Activated CD4-positive, alpha-beta memory T cell treated with anti-CD3 and anti-CD28 coated beads for 36 hours (primary cell): ENCODE measurements at regions of chr12 and their contacts with region 1.

Region 1: GRCh38 chr12:133080368-133081158 is at the start of gene ZNF140:
- DNase-seq: peak; percentile 97
- H3K4me3 Mint-ChIP-seq: no peak within 1 kb of the TSS
- H3K27ac Mint-ChIP-seq: no peak within 1 kb of the TSS
- H3K4me1 Mint-ChIP-seq: peaks cover 7% of the 10 kb centered on the region
- H3K27me3 Mint-ChIP-seq: no peaks in the 10 kb centered on the region
- total RNA-seq, gene ZNF140: 11.8 to 14.1 TPM

Region 2: DNA sequence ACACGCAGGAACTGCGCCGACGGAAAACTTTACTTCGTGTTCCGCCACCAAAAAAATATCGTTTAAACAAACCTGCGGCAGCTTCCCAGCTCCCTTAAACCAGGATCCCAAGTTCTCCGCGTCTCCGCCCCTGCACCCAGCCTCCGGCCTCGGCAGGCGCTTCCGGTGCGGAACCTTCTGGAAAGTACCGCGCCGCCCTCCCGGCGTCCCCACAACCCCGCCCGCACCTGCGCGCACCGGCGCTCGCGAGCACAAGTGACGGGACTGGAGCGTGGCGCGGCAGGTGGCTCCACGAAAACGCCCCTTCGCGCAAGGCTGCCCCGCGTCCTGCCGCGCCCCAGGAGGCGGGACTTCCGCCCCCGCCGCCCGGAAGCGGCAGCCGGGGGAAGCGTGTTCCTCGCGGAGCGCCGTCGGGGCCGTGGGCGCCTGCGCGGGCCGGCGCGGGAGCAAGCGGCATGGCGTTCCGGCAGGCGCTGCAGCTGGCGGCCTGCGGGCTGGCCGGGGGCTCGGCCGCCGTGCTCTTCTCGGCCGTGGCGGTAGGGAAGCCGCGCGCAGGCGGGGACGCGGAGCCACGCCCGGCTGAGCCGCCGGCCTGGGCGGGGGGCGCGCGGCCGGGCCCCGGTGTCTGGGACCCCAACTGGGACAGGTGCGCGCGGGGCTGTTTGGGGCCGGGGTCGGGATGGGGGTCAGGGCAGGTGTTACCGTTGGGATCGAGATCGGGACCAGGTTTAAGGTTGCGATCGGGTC is 370.0 kb before region 1 on chr12 and contains the start of gene PGAM5:
- CTCF ChIA-PET with region 1: no interaction called
- POLR2A ChIA-PET with region 1: no interaction called
- intact Hi-C with region 1: loop called (anchors 1 kb)
- DNase-seq: peak; percentile 93
- H3K4me3 Mint-ChIP-seq: peak within 1 kb of the TSS; percentile 83
- H3K27ac Mint-ChIP-seq: peak within 1 kb of the TSS; percentile 86
- H3K4me1 Mint-ChIP-seq: peaks cover 23% of the 10 kb centered on the region
- H3K27me3 Mint-ChIP-seq: no peaks in the 10 kb centered on the region
- total RNA-seq, gene PGAM5: 54.3 to 56.4 TPM

Region 3: GRCh38 chr12:132828706-132829534 is 251.6 kb before region 1 on chr12 and contains the start of gene GOLGA3:
- CTCF ChIA-PET with region 1: no interaction called
- POLR2A ChIA-PET with region 1: no interaction called
- intact Hi-C with region 1: loop called (anchors 1 kb)
- DNase-seq: peak; percentile 96
- H3K4me3 Mint-ChIP-seq: peak within 1 kb of the TSS; percentile 96
- H3K27ac Mint-ChIP-seq: peak within 1 kb of the TSS; percentile 100
- H3K4me1 Mint-ChIP-seq: peaks cover 50% of the 10 kb centered on the region
- H3K27me3 Mint-ChIP-seq: no peaks in the 10 kb centered on the region
- total RNA-seq, gene GOLGA3: 41.7 to 44.2 TPM

Region 4: GRCh38 chr12:132908145-132909044 is 172.2 kb before region 1 on chr12:
- CTCF ChIA-PET with region 1: no interaction called
- POLR2A ChIA-PET with region 1: no interaction called
- intact Hi-C with region 1: loop called (anchors 1 kb)
- DNase-seq: peak; percentile 99
- H3K4me3 Mint-ChIP-seq: peak overlapping the region; percentile 86
- H3K27ac Mint-ChIP-seq: peak overlapping the region; percentile 92
- H3K4me1 Mint-ChIP-seq: peaks cover 17% of the 10 kb centered on the region
- H3K27me3 Mint-ChIP-seq: peaks cover 4% of the 10 kb centered on the region

Region 5: DNA sequence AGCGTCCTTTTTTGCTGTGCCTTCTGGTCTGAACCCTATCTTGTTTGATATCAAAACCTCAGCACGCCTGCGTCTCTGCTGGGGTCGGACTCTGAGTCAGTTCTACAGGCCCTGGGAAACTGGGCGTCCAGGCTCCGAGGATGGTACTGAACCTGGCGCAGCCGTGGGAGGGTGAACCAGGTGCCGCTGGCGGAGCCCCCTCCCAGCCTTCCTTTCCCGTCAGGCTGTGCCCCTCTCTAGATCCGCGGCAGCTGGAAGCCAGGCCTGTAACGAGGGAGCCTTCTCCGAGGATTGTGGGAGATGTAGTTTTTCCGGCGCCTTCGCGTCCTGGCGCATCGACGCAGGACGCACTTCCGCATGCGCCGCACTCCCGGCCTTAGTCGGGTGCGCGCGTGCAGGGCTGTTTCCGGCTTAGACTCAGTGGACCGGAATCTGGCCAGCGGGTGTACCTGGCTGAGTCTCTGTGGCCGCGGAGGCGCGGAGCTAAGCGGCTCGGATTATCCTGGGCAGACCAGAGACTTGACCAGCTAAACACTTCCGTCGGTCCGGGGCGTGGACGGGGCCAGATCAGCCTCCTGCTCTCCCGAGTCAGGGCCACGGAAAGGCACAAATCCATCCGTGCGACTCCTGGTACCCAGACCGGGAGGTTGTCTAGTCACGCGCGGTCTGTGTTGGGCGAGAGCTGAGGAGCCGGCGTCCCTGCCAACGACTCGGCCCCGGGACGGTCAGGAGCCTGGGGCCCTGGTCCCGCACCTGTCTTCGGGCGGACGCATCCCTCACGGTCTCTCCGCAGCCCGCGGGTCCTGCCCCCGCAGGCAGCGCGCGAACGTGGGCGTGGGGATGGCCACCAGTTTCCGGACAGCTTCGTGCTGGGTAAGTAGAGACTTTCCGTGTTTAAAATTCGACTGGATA is 94.3 kb before region 1 on chr12 and contains the start of gene ZNF26:
- CTCF ChIA-PET with region 1: interaction called, 3 read pairs
- POLR2A ChIA-PET with region 1: interaction called, 13 read pairs
- intact Hi-C with region 1: loop called (anchors 1 kb)
- DNase-seq: peak; percentile 92
- H3K4me3 Mint-ChIP-seq: peak within 1 kb of the TSS; percentile 89
- H3K27ac Mint-ChIP-seq: peak within 1 kb of the TSS; percentile 94
- H3K4me1 Mint-ChIP-seq: peaks cover 27% of the 10 kb centered on the region
- H3K27me3 Mint-ChIP-seq: no peaks in the 10 kb centered on the region
- total RNA-seq, gene ZNF26: 10.2 to 10.8 TPM

Region 6: GRCh38 chr12:133023566-133023965 is 57.0 kb before region 1 on chr12:
- CTCF ChIA-PET with region 1: no interaction called
- POLR2A ChIA-PET with region 1: no interaction called
- intact Hi-C with region 1: no loop called
- DNase-seq: no peak
- H3K4me3 Mint-ChIP-seq: no peak overlapping the region
- H3K27ac Mint-ChIP-seq: no peak overlapping the region
- H3K4me1 Mint-ChIP-seq: no peaks in the 10 kb centered on the region
- H3K27me3 Mint-ChIP-seq: no peaks in the 10 kb centered on the region

Region 7: DNA sequence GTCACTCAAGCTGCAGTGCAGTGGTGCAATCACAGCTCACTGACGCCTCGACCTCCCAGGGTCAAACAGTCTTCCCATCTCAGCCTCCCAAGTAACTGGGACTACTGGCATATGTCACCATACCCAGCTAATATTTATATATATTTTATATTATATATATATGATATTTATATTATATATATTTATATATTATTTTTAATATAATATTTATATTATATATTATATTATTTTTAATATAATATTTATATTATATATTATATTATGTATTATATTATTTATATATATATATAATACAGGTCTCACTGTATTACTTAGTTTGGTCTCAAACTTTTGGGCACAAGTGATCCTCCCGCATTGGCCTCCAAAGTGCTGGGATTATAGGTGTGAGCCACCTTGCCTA is 33.9 kb before region 1 on chr12:
- CTCF ChIA-PET with region 1: no interaction called
- POLR2A ChIA-PET with region 1: no interaction called
- intact Hi-C with region 1: no loop called
- DNase-seq: no peak
- H3K4me3 Mint-ChIP-seq: no peak overlapping the region
- H3K27ac Mint-ChIP-seq: no peak overlapping the region
- H3K4me1 Mint-ChIP-seq: no peaks in the 10 kb centered on the region
- H3K27me3 Mint-ChIP-seq: no peaks in the 10 kb centered on the region

Region 8: DNA sequence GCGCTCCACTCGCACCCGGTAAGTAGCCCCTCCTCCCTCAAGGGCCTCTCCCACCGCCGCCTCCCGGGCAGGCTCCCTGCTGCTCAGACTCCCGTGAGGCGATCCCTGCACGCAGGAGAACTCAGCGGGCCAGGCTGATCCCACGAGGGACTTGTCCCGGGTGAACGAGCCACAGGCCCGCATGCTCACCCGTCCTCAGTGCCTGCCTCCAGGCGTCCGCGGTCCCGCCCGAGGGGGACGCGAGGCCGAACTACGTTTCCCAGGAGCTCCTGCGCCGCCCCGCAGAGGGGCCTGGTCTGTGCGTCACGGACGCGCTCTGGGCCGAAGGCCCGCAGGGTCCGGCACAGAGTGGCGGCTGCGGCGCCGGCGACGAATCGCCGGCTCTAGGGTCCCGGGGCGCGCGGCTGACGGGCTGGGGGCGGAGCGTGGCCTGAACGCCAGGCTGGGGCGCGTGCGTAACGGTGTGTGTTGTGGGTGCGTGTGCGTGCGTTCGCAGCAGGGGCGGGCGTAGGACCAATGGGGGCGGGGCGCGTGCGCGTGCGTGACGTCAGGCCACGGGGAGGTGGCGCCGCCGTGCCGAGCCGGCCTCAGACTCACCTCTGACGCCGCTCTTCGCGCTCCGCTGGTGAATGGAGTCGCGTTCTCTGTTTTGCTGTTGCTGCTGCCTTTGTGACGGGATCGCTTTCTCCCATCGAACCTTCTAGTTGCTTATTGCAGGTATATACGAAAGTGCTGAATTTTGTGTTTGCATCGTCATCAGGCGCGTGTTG is 49.7 kb after region 1 on chr12 and contains the starts of genes ZNF10 and ZNF891:
- CTCF ChIA-PET with region 1: interaction called, 4 read pairs
- POLR2A ChIA-PET with region 1: interaction called, 9 read pairs
- intact Hi-C with region 1: loop called (anchors 1 kb)
- DNase-seq: peak; percentile 98
- H3K4me3 Mint-ChIP-seq: peak within 1 kb of the TSS; percentile 97
- H3K27ac Mint-ChIP-seq: peak within 1 kb of the TSS; percentile 96
- H3K4me1 Mint-ChIP-seq: peaks cover 14% of the 10 kb centered on the region
- H3K27me3 Mint-ChIP-seq: no peaks in the 10 kb centered on the region
- total RNA-seq, gene ZNF10: 3.7 to 4.1 TPM
- total RNA-seq, gene ZNF891: 1.1 to 1.2 TPM